Aorta (tissue), 5 donors: ENCODE measurements at regions of chr10 and their contacts with region 1.

Region 1: GRCh38 chr10:98309366-98310355 is 41.7 kb upstream of the LOXL4 start:
- DNase-seq: peak; percentile 79 to 91
- ATAC-seq: peak; percentile 94
- H3K4me3 ChIP-seq: no peak overlapping the region
- H3K27ac ChIP-seq: no peak overlapping the region
- H3K4me1 ChIP-seq: no peaks in the 10 kb centered on the region
- H3K27me3 ChIP-seq: no peaks in the 10 kb centered on the region

Region 2: DNA sequence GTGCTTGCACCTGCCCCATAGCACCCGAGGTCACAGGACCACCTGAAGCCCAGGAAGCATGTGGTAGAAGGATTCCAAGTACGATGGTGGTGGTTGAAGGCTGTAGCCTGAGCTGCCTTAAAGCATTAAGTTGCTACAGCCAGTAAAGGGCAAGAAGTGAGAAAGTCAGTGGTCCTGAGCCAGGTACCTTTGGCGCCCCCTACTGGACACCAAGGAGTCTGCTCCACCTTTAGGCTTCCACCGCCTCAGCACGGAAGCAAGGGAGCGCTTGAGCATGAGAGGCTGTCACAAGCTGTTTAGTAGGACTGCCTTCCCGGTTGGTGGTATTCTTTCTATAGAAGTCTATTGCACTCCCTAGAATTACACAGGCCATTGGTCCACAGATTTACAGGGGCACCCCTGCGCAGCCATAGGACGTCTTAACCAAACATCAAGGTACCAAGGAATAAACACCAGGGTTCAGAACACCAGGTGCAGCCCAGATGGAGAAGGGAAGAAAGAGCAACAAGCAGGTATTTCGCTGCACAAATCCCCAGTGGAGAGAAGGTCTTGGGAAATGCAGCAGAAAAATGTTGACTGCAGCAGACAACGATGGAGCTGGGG is 281.4 kb before region 1 on chr10:
- intact Hi-C with region 1: no loop called
- DNase-seq: peak; percentile 56 to 80
- ATAC-seq: no peak
- H3K4me3 ChIP-seq: no peak overlapping the region
- H3K27ac ChIP-seq: no peak overlapping the region
- H3K4me1 ChIP-seq: no peaks in the 10 kb centered on the region
- H3K27me3 ChIP-seq: peaks cover 0 to 3% of the 10 kb centered on the region in 2 donors

Region 3: DNA sequence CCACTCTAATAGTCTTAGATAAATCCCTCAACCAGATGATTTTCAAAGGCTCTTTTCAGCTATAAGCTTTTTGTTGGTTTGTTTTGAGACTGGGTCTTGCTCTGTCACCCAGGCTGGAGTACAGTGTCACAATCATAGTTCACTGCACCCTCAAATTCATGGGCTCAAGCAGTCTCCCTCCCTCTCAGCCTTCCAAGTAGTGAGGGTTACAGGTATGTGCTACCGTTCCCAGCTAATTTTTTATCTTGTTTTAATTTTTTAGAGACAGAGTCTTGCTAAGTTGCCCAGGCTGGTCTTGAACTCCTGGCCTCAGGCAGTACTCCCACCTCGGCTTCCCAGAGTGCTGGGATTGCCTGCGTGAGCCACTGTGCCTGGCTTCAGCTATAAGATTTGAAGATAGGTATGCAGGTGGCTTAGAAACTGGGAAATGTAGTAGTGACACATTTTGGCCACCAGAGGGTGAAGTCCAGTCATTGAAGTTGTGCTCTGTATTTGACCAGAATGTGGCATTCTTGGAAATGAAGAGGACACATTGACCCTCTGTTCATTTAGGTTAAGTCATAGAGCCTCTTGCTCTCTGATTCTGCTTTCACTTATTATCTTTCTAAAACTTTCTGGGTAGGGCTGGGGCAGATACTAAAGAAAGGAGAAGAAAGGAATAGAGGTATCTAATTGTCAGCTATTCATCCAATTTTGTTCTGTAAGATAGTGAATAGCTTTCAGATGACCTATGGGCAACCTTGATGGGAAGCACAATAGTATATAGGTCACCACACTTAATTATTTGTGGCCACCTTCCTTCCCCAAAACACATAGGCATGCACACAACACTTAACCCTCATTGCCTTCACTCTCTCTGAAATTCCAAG is 139.2 kb before region 1 on chr10:
- intact Hi-C with region 1: loop called (anchors 2 to 5 kb)
- DNase-seq: no peak
- ATAC-seq: peak; percentile 70
- H3K4me3 ChIP-seq: no peak overlapping the region
- H3K27ac ChIP-seq: no peak overlapping the region
- H3K4me1 ChIP-seq: peaks cover 0 to 2% of the 10 kb centered on the region in 2 donors
- H3K27me3 ChIP-seq: no peaks in the 10 kb centered on the region

Region 4: DNA sequence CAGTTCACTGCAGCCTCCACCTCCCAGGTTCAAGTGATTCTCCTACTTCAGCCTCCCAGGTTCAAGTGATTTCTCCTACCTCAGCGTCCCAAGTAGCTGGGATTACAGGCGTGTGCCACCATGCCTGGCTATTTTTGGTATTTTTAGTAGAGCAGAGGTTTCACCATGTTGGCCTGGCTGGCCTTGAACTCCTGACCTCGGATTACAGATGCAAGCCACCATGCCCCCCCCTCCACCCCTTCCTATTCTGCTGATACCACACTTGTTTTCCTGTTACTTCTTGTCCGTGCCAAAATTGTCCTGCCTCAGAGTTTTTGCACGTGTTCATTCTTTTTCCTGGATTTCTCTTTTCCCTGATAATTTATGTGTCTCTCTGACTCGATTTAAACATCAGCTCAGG is 112.7 kb before region 1 on chr10:
- intact Hi-C with region 1: no loop called
- DNase-seq: no peak
- ATAC-seq: no peak
- H3K4me3 ChIP-seq: no peak overlapping the region
- H3K27ac ChIP-seq: no peak overlapping the region
- H3K4me1 ChIP-seq: no peaks in the 10 kb centered on the region
- H3K27me3 ChIP-seq: no peaks in the 10 kb centered on the region

Region 5: GRCh38 chr10:98242823-98243222 is 66.8 kb before region 1 on chr10:
- intact Hi-C with region 1: loop called (anchors 1 to 5 kb)
- DNase-seq: no peak
- ATAC-seq: no peak
- H3K4me3 ChIP-seq: no peak overlapping the region
- H3K27ac ChIP-seq: no peak overlapping the region
- H3K4me1 ChIP-seq: peaks cover 2 to 5% of the 10 kb centered on the region in 2 donors
- H3K27me3 ChIP-seq: no peaks in the 10 kb centered on the region

Region 6: GRCh38 chr10:98262571-98262970 is 47.1 kb before region 1 on chr10:
- intact Hi-C with region 1: loop called in 1 of 2 experiments (anchors 1 kb)
- DNase-seq: no peak
- ATAC-seq: no peak
- H3K4me3 ChIP-seq: no peak overlapping the region
- H3K27ac ChIP-seq: no peak overlapping the region
- H3K4me1 ChIP-seq: no peaks in the 10 kb centered on the region
- H3K27me3 ChIP-seq: no peaks in the 10 kb centered on the region

Region 7: GRCh38 chr10:98276311-98276710 is 33.4 kb before region 1 on chr10:
- intact Hi-C with region 1: no loop called
- DNase-seq: no peak
- ATAC-seq: no peak
- H3K4me3 ChIP-seq: no peak overlapping the region
- H3K27ac ChIP-seq: no peak overlapping the region
- H3K4me1 ChIP-seq: no peaks in the 10 kb centered on the region
- H3K27me3 ChIP-seq: no peaks in the 10 kb centered on the region

Region 8: GRCh38 chr10:98331885-98332284 is 22.2 kb after region 1 on chr10:
- intact Hi-C with region 1: no loop called
- DNase-seq: no peak
- ATAC-seq: no peak
- H3K4me3 ChIP-seq: no peak overlapping the region
- H3K27ac ChIP-seq: no peak overlapping the region
- H3K4me1 ChIP-seq: no peaks in the 10 kb centered on the region
- H3K27me3 ChIP-seq: no peaks in the 10 kb centered on the region

Region 9: DNA sequence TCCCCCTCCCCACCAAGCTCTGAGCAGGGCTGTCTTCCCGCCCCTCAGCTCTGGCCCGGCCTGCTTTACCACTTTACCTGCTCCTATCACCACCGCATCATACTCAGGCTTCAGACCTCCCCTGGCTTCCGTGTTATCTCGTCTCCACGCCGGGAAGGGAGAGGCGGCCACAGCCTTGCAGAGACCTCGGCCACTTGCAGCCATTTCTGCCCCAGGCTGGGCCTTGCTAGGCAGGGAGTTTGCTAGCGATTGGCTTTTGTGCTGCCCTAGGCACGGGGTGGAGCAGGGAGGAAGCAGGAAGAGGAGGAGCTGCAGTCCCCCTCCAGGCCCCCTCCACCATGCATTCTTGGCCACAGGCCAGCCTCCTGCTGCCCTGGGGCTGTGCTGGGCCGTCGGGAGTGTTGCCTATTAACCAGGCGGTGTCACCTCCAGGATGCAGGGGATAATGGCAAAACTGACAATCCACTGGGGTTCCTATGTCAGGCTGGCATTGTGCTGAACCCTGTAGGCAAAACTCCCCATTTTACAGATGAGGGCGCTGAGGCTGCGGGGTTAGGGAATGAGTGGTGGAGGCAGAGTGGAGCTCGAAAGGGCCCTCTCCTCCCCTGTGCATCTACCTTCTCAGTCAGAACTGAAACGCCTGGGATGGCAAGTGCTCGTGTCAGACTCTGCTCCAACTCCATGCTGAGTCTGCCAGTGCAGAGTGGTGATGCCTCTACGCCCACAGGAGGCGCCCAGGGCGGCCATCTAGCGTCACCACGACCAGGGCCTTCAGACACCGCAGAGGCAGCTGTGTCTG is 105.5 kb after region 1 on chr10 and contains the start of gene PYROXD2:
- intact Hi-C with region 1: loop called in 1 of 2 experiments (anchors 10 kb)
- DNase-seq: peak; percentile 96
- ATAC-seq: peak; percentile 95
- H3K4me3 ChIP-seq: peak within 1 kb of the TSS; percentile 14 to 56
- H3K27ac ChIP-seq: peak within 1 kb of the TSS in 1 of 2 donors; percentile 22
- H3K4me1 ChIP-seq: no peaks in the 10 kb centered on the region
- H3K27me3 ChIP-seq: no peaks in the 10 kb centered on the region
- total RNA-seq, gene PYROXD2: 8.7 to 17.7 TPM